ENCODE measurements at regions of chr5 and their contacts with region 1.

Region 1: DNA sequence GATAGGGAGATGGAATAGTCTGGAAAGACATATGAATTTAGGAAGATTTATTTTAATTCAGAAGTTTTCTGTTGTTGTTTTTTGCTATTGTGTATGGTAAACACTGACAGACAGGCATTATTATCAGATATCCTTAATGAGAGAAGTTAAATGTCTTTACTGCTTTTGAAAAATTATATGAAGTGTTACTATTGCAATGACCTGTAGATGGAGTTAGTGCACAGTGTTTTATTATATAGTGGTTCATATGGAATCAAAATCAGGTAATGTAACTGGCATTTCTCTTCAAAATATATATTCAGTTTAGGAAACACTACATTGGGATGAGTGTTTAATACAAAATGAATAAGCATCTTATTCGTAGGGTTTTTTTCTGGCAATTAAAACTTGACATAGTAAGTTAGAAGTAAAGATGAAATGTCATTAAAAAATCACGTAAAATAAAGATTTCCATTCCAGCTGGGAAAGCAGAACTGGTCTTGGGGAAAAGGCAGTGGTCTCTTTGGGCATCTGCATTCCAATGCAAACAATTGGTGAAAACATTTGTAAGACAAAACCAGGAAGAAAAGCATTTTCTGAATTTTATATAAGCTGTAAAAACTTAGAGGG is 3.9 kb downstream of the GABRA1 start:
- DNase-seq: no peak
- H3K4me3 ChIP-seq: no peak overlapping the region
- H3K4me3 Mint-ChIP-seq: no peak overlapping the region
- H3K27ac Mint-ChIP-seq: no peak overlapping the region
- H3K4me1 ChIP-seq: no peaks in the 10 kb centered on the region
- H3K4me1 Mint-ChIP-seq: no peaks in the 10 kb centered on the region
- H3K27me3 ChIP-seq: no peaks in the 10 kb centered on the region
- H3K27me3 Mint-ChIP-seq: peaks cover 4% of the 10 kb centered on the region
- CTCF ChIP-seq: no peak

Region 2: GRCh38 chr5:161790926-161791325 is 60.9 kb before region 1 on chr5:
- CTCF ChIA-PET with region 1: no interaction called
- POLR2A ChIA-PET with region 1: no interaction called
- intact Hi-C with region 1: no loop called
- DNase-seq: no peak
- H3K4me3 ChIP-seq: no peak overlapping the region
- H3K4me3 Mint-ChIP-seq: no peak overlapping the region
- H3K27ac Mint-ChIP-seq: no peak overlapping the region
- H3K4me1 ChIP-seq: no peaks in the 10 kb centered on the region
- H3K4me1 Mint-ChIP-seq: no peaks in the 10 kb centered on the region
- H3K27me3 ChIP-seq: no peaks in the 10 kb centered on the region
- H3K27me3 Mint-ChIP-seq: peaks cover 2% of the 10 kb centered on the region
- CTCF ChIP-seq: no peak

Region 3: DNA sequence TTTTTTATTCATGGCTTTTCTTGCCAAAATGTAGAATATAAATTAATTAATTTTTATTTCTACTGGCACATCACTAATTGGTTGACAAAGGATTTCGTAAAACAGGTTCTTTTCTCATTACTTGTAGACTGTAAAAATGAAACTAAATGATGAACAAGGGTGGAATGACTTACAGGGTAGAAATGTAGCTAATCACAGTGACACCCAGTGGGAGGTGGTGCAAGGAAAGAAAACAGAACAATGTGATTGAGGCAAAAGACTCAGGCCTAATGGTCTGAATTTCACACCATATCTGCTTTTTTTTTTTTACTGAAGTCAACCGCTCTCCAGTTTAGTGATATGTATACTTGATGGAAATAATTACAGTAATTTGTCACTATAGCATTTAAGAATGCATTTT is 244.7 kb after region 1 on chr5:
- CTCF ChIA-PET with region 1: no interaction called
- POLR2A ChIA-PET with region 1: no interaction called
- intact Hi-C with region 1: loop called (anchors 1 kb)
- DNase-seq: peak in 1 of 2 experiments; percentile 4
- H3K4me3 ChIP-seq: no peak overlapping the region
- H3K4me3 Mint-ChIP-seq: no peak overlapping the region
- H3K27ac Mint-ChIP-seq: no peak overlapping the region
- H3K4me1 ChIP-seq: no peaks in the 10 kb centered on the region
- H3K4me1 Mint-ChIP-seq: no peaks in the 10 kb centered on the region
- H3K27me3 ChIP-seq: no peaks in the 10 kb centered on the region
- H3K27me3 Mint-ChIP-seq: peaks cover 2% of the 10 kb centered on the region
- CTCF ChIP-seq: no peak

Region 4: GRCh38 chr5:162196351-162196750 is 344.6 kb after region 1 on chr5:
- CTCF ChIA-PET with region 1: no interaction called
- POLR2A ChIA-PET with region 1: no interaction called
- intact Hi-C with region 1: no loop called
- DNase-seq: no peak
- H3K4me3 ChIP-seq: no peak overlapping the region
- H3K4me3 Mint-ChIP-seq: no peak overlapping the region
- H3K27ac Mint-ChIP-seq: no peak overlapping the region
- H3K4me1 ChIP-seq: no peaks in the 10 kb centered on the region
- H3K4me1 Mint-ChIP-seq: no peaks in the 10 kb centered on the region
- H3K27me3 ChIP-seq: no peaks in the 10 kb centered on the region
- H3K27me3 Mint-ChIP-seq: no peaks in the 10 kb centered on the region
- CTCF ChIP-seq: no peak

Region 5: DNA sequence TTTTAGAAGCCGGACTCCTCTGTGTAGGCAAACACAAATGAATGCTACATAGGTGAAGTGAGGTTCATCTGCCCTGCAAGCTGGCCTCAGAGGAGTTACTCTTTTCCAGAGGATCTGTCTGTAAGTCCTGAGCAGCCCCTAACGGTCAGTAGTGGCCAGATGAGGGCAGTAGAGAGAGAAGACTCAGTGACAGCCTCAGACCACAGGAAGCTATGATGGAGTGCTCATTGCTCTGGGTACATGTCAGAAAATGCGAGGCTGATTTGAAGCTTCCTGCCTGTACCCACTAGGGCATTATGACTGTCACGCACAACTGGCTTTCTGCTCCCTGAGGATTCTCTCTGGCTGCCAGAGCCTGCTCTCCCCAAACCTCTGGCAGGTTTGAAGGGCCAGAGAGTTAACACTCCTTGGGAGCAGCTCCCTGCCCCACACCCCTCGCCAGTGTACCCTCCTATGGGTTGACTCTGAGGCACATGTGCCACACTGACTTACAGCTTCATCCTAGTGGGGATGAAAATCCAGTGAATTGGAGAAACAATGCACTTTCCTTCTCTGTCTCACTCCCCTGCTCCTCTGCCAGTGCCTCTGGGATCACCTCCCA is 357.3 kb after region 1 on chr5:
- CTCF ChIA-PET with region 1: no interaction called
- POLR2A ChIA-PET with region 1: no interaction called
- intact Hi-C with region 1: loop called (anchors 5 kb)
- DNase-seq: peak; percentile 66 to 69
- H3K4me3 ChIP-seq: no peak overlapping the region
- H3K4me3 Mint-ChIP-seq: no peak overlapping the region
- H3K27ac Mint-ChIP-seq: no peak overlapping the region
- H3K4me1 ChIP-seq: no peaks in the 10 kb centered on the region
- H3K4me1 Mint-ChIP-seq: no peaks in the 10 kb centered on the region
- H3K27me3 ChIP-seq: no peaks in the 10 kb centered on the region; the same call in 1 of the 2 replicates
- H3K27me3 Mint-ChIP-seq: peaks cover 6% of the 10 kb centered on the region
- CTCF ChIP-seq: peak; percentile 55 to 74